ENCODE measurements at regions of chr15 and their contacts with region 1.

Region 1: GRCh38 chr15:63504247-63504978 is at the start of gene USP3:
- DNase-seq: peak; percentile 67 to 97
- ATAC-seq: peak; percentile 52 to 73
- H3K4me3 ChIP-seq: peak within 1 kb of the TSS; percentile 77
- H3K27ac ChIP-seq: peak within 1 kb of the TSS; percentile 99
- H3K4me1 ChIP-seq: peaks cover 64% of the 10 kb centered on the region
- CTCF ChIP-seq: peak; percentile 30; the same call in 1 of the 3 replicates
- EP300 ChIP-seq: no peak; a peak in 1 of 5 replicates
- POLR2A ChIP-seq: peak; percentile 47
- RAD21 ChIP-seq: peak in 1 of 2 experiments; percentile 73
- polyA plus RNA-seq, gene USP3: 97.4 and 99.1 TPM in 2 replicates

Region 2: DNA sequence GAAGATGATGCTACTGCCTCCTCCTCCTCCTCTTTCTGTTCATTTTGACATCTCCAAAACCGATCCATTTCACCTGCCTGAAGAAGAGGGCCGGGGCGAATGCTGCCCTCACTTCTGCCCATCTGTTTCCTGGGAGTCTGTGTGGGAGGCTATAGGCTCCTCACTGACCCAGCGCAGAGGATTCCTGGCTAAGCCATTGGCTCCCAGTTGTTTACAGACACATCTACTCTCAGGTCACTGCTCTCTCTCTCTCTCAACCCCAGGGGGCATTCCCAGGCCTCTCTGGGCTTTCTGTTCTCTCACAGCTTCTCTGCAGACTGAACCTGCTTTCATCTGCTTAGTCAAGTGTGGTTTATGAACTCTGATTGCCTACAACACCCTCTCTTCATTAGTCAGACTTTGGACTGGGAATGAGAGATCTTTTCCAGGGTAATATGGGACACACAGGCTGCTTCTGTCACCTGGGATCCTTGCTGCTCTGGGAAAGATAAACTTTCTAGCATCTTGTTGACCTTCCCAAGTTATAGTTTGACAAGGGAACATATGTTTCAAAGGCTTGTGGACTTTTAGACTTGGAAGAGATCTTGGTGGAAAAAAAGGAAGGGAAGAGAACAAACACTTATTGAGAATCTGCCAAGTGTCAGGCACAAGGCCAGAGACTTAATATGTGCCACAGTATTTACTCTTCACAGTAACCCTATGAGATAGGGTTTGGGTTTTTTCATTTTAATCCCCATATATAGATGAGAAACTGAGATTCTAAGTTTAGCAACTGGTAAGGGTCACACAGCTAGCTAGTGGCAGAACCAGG is 30.2 kb before region 1 on chr15:
- CTCF ChIA-PET with region 1: interaction called, 127 read pairs
- POLR2A ChIA-PET with region 1: interaction called, 14 read pairs
- DNase-seq: peak in 1 of 2 experiments; percentile 95
- ATAC-seq: peak; percentile 82
- H3K4me3 ChIP-seq: no peak overlapping the region
- H3K27ac ChIP-seq: peak overlapping the region; percentile 81 to 90
- H3K4me1 ChIP-seq: peaks cover 59% of the 10 kb centered on the region
- CTCF ChIP-seq: no peak
- EP300 ChIP-seq: peak; percentile 24 to 45; a peak in 3 of 5 replicates
- POLR2A ChIP-seq: no peak
- RAD21 ChIP-seq: peak; percentile 25 to 43; a peak in 2 of 5 replicates

Region 3: DNA sequence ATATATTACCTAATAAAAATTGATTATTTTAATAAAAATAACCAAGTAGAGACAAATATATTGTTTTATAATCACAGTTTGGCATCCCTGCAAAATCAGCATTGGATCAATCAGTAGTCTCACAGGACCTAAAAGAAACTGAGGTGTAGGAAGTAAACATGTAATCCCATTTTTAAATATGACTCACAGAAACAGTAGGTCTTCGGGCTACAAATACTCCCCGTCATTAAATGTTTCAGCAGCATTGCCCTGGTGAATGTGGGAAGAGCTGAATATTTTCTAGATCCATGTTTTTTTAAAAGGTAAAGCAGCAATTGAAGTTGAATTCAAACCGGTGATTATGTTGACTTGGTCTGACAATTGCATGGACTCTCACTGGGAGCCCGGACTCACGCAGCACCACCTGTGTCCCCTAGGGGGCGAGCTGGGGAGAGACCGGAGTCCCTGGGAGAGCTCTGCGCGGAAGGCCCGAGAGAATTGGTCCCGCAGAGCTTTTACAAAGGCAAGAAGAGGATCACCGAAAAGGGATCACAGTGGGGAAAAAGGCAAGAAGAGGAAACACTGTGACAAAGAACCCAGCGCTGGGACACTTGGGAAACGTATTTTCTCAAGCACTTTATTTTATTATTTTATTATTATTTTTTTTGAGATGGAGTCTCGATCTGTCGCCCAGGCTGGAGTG is 17.2 kb before region 1 on chr15:
- CTCF ChIA-PET with region 1: interaction called, 161 read pairs
- POLR2A ChIA-PET with region 1: interaction called, 49 read pairs
- DNase-seq: peak; percentile 90 to 96
- ATAC-seq: peak; percentile 90 to 91
- H3K4me3 ChIP-seq: no peak overlapping the region
- H3K27ac ChIP-seq: peak overlapping the region; percentile 60 to 74
- H3K4me1 ChIP-seq: peaks cover 59% of the 10 kb centered on the region
- CTCF ChIP-seq: peak; percentile 95
- EP300 ChIP-seq: no peak
- POLR2A ChIP-seq: no peak
- RAD21 ChIP-seq: peak; percentile 91 to 92

Region 4: DNA sequence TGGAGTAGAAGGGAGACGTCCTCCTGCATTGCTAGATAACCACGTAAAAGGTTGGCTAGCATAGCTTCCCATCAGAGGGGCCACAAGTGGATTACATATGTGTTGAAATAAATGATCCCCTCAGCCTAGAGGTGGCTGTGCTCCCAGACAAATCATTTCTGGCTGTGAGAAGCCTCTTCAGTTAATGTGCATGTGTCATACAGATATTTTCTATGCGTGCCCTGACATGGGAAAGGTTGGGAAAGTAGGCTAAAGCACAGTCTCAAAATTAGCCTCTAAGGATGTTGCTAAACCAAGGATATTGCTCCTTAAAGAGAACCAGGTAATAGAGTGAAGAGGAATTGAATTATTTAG is 17.8 kb after region 1 on chr15:
- CTCF ChIA-PET with region 1: interaction called, 13 read pairs
- POLR2A ChIA-PET with region 1: interaction called, 11 read pairs
- DNase-seq: no peak
- ATAC-seq: peak in 1 of 2 experiments; percentile 9; a peak in 1 of 6 replicates
- H3K4me3 ChIP-seq: no peak overlapping the region
- H3K27ac ChIP-seq: no peak overlapping the region
- H3K4me1 ChIP-seq: peaks cover 78% of the 10 kb centered on the region
- CTCF ChIP-seq: no peak
- EP300 ChIP-seq: no peak
- POLR2A ChIP-seq: no peak
- RAD21 ChIP-seq: no peak

Region 5: DNA sequence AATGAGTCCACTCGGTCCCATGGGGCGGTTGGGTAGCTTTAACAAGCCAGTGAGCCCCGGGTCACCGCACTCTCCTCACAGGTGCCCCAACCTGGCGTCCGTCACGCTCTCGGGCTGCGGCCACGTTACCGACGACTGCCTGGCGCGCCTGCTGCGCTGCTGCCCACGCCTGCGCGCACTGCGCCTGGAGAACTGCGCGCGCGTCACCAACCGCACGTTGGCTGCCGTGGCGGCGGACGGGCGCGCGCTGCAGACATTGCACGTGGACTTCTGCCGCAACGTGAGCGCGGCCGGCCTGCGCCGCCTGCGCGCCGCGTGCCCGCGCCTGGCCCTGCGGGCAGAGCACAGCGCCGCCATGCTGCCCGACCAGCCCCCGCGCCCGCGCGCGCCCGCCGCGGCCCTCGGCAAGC is 96.2 kb after region 1 on chr15:
- CTCF ChIA-PET with region 1: interaction called, 45 read pairs
- POLR2A ChIA-PET with region 1: interaction called, 25 read pairs
- DNase-seq: peak; percentile 94 to 96
- ATAC-seq: peak; percentile 70 to 79
- H3K4me3 ChIP-seq: peak overlapping the region; percentile 83
- H3K27ac ChIP-seq: peak overlapping the region; percentile 91 to 93
- H3K4me1 ChIP-seq: peaks cover 20% of the 10 kb centered on the region; the same call in 2 of the 3 replicates
- CTCF ChIP-seq: peak; percentile 46; the same call in 1 of the 3 replicates
- EP300 ChIP-seq: no peak
- POLR2A ChIP-seq: peak; percentile 97
- RAD21 ChIP-seq: no peak; a peak in 1 of 5 replicates

Measured in A549 (cell line).